ENCODE measurements at regions of chr19 and their contacts with region 1.

Region 1: DNA sequence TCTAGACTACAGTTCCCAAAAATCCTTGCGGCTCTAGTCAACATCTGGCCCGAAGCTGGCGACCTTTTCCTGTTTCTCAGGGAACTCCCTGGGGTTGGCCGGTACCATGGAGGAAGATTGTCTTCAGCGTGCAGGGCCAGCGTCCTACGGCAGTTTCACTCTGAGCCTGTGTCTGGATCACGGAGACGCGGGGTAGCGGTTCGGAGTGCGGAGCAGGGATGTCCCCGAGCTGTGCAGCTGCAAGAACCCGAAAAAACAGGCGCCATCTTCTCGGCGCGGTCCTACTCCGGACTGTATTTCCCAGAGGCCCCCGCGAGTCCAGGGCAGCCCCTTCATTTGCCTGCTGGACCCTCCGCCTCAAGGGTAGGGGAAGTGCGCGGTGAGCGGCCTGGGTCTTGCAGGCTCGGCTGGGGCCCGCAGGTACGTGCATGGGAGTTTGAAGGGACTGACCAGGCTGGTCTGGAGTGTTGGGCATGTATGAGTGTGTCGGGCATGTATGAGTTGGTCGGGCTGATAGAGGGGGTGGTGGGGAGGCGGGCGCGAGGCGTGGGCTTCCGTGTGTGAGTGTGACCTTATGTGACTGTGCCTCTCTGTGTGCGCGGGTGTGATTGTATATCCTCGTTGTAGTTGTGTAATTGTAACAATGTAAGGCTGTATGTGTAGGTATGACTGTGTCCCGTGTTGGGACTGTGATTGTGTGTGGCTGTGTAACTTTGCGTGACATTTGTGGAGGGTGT is at the start of gene ZNF383:
- DNase-seq: peak; percentile 90
- H3K4me3 ChIP-seq: peak within 1 kb of the TSS; percentile 66 to 84 (median 73)
- H3K27ac ChIP-seq: peak within 1 kb of the TSS; percentile 68
- H3K4me1 ChIP-seq: peaks cover 11% of the 10 kb centered on the region
- H3K27me3 ChIP-seq: no peaks in the 10 kb centered on the region
- CTCF ChIP-seq: no peak
- total RNA-seq, gene ZNF383: 6.2 to 9.7 TPM

Region 2: GRCh38 chr19:36528194-36528920 is 689.7 kb before region 1 on chr19 and contains the start of gene ZNF260:
- CTCF ChIA-PET with region 1: no interaction called
- dilution Hi-C with region 1: no loop called
- in situ Hi-C with region 1: no loop called
- intact Hi-C with region 1: loop called (anchors 10 kb)
- DNase-seq: peak; percentile 96
- H3K4me3 ChIP-seq: peak within 1 kb of the TSS; percentile 47 to 99 (median 86)
- H3K27ac ChIP-seq: peak within 1 kb of the TSS; percentile 88
- H3K4me1 ChIP-seq: peaks cover 5% of the 10 kb centered on the region
- H3K27me3 ChIP-seq: no peaks in the 10 kb centered on the region
- CTCF ChIP-seq: peak in 1 of 2 donors; percentile 9
- total RNA-seq, gene ZNF260: 11.8 to 21.0 TPM

Region 3: DNA sequence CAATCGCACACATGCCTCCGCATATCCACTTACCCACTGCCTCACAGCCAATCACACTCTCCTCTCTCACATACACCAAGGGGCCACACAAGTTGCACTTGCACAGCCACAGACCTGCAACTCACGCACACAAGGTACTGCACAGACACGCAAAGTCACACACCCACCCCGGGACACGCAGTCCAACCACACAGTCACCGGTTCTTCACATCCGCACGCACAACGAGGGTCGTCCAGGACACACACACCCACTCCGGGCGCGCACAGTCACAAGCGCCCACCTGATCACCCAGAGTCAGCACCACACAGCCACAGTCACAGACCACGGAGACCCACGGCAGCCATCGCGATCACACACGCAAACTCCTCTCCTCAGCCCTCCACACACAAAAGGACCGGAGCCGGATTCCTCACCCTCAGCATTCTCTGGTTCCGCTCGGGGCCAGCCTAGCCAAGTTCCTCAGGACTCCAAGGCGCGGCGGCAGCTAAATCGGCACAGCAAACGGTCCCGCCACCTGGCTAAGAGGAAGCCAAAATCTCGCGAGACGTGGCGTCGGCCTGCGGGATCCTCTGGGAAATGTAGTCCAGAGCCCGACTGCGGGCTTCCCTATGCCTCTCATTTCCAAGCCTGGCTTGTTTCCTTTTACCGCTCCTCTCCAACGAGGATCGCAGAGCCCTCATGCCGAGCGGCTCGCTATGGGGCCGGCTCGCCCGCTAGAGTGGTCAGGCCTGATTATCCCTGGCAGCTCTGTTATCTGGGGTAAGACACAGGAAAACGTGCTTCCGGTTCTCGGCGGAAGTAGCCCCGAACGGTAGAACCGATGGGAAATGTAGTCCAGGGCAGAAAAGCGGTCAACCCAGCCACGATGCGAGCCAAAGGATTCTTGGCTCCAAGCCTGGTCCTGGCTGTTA is 445.5 kb before region 1 on chr19 and contains the start of gene ZNF850:
- CTCF ChIA-PET with region 1: no interaction called
- dilution Hi-C with region 1: no loop called
- in situ Hi-C with region 1: no loop called
- intact Hi-C with region 1: loop called (anchors 10 kb)
- DNase-seq: peak; percentile 93
- H3K4me3 ChIP-seq: peak within 1 kb of the TSS; percentile 77 to 96 (median 89)
- H3K27ac ChIP-seq: peak within 1 kb of the TSS; percentile 3
- H3K4me1 ChIP-seq: no peaks in the 10 kb centered on the region
- H3K27me3 ChIP-seq: no peaks in the 10 kb centered on the region
- CTCF ChIP-seq: no peak
- total RNA-seq, gene ZNF850: 1.6 to 2.2 TPM

Region 4: DNA sequence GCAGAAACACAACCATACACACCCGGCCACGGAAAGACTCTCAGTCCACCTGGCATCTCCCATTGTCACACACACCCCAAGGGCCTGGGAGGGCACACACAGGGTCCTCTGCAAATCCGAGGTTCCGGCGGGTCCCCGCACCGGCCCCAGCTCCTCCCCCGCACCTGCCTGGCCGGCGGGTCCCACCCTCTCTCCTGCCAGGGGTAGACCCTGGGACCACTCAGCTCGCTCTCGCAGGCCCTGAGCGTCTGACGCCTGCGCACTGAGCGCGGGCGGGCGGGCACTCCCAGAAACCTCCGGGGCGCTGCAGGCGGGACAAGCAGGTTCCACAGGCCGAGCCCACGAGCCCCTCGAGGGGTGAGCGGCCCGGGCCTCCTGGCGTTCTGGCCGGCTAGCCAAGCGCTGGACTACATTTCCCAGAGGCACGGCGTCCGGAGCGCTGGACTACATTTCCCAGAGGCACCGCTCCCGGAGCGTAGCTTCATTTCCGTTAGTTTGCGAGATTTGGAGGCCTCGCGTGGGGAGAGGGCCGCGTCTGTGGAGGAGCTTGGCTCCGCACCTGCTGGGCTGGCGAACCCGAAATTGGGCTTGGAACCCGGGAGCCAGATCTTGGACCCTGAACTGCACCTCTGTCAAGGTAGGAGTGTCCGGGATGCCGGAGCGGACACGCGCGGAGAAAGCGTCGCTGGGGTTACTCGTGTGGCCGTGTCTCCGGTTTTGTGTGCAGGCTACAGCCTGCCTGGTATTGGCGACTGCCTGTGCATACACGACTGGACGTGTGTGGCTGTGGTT is 139.9 kb before region 1 on chr19 and contains the start of gene ZNF420:
- CTCF ChIA-PET with region 1: no interaction called
- dilution Hi-C with region 1: no loop called
- in situ Hi-C with region 1: no loop called
- intact Hi-C with region 1: loop called (anchors 2 kb)
- DNase-seq: peak; percentile 94
- H3K4me3 ChIP-seq: peak within 1 kb of the TSS; percentile 74 to 91 (median 87)
- H3K27ac ChIP-seq: peak within 1 kb of the TSS; percentile 41
- H3K4me1 ChIP-seq: peaks cover 8% of the 10 kb centered on the region
- H3K27me3 ChIP-seq: no peaks in the 10 kb centered on the region
- CTCF ChIP-seq: no peak
- total RNA-seq, gene ZNF420: 4.1 to 9.0 TPM

Region 5: GRCh38 chr19:37098548-37098947 is 119.5 kb before region 1 on chr19:
- CTCF ChIA-PET with region 1: no interaction called
- dilution Hi-C with region 1: no loop called
- in situ Hi-C with region 1: no loop called
- intact Hi-C with region 1: no loop called
- DNase-seq: no peak
- H3K4me3 ChIP-seq: no peak overlapping the region
- H3K27ac ChIP-seq: no peak overlapping the region
- H3K4me1 ChIP-seq: no peaks in the 10 kb centered on the region
- H3K27me3 ChIP-seq: no peaks in the 10 kb centered on the region
- CTCF ChIP-seq: no peak

Region 6: DNA sequence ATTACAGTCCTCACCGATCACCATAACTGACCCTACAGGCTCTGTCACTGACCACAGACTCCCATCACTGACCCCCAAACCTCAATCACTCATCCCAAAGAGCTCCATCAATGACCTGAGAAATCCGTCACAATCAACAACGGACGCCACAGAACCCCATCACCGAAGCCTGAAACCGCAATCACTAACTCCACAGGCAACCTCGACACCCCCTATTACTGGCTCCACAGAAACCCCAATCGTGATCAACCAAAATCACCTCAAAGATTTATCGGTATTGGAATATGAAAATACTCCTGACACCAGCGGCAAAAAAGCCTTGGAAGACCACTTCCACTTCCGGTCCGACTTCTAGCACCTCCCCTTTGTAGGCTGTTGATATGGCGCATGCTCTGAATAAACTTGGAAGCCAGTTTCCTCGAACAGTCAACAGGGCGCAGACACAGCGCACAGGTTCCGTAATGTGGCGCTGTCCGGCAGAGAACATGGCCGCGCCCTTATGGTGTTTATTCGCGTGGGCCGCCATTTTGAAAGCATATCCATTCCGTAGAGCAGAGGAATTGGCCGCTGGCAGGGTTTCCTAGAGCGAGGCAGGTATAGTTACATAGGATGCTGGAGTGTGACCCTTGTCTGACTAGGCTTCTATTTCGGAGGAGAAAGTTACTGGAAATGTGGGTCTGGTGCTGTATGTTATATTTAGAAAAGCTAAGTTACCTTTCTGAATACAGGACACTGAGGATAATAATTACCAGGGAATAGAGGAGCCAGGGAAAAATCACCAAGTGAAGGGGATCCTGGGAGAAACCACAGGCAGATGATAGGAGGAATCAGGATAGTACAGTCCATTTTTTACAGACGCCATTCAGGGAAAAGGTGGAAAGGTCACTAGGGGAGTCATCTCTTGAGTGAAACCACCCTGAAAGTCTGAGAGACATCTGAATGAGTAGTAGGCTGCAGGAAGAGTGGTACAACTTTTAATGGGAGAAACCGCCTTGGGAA is 45.4 kb before region 1 on chr19 and contains the start of gene ZNF585A:
- CTCF ChIA-PET with region 1: no interaction called
- dilution Hi-C with region 1: no loop called
- in situ Hi-C with region 1: no loop called
- intact Hi-C with region 1: loop called (anchors 2 kb)
- DNase-seq: peak; percentile 95
- H3K4me3 ChIP-seq: peak within 1 kb of the TSS; percentile 51 to 97 (median 91)
- H3K27ac ChIP-seq: peak within 1 kb of the TSS; percentile 46
- H3K4me1 ChIP-seq: no peaks in the 10 kb centered on the region
- H3K27me3 ChIP-seq: no peaks in the 10 kb centered on the region
- CTCF ChIP-seq: peak in 1 of 2 donors; percentile 41
- total RNA-seq, gene ZNF585A: 10.4 to 13.7 TPM

Measured in mammary epithelial cell (primary cell).